HepG2 (cell line): ENCODE measurements at regions of chr15 and their contacts with region 1.

Region 1: GRCh38 chr15:56918046-56918938 is at the start of gene TCF12:
- DNase-seq: peak; percentile 71
- ATAC-seq: peak; percentile 83
- H3K4me3 ChIP-seq: peak within 1 kb of the TSS; percentile 76 to 99 (median 88)
- H3K27ac ChIP-seq: peak within 1 kb of the TSS; percentile 85
- H3K4me1 ChIP-seq: peaks cover 34% of the 10 kb centered on the region
- H3K27me3 ChIP-seq: no peaks in the 10 kb centered on the region
- CTCF ChIP-seq: peak; percentile 57
- EP300 ChIP-seq: peak; percentile 16 to 48; a peak in 1 of 4 replicates
- POLR2A ChIP-seq: peak; percentile 55 to 64; a peak in 3 of 4 replicates
- RAD21 ChIP-seq: peak; percentile 51; the same call in 1 of the 2 replicates
- total RNA-seq, gene TCF12: 51.1 and 70.7 TPM in 2 replicates

Region 2: GRCh38 chr15:56886932-56887781 is 31.1 kb before region 1 on chr15:
- CTCF ChIA-PET with region 1: no interaction called
- POLR2A ChIA-PET with region 1: interaction called, 60 read pairs
- in situ Hi-C with region 1: no loop called
- intact Hi-C with region 1: loop called (anchors 1 kb)
- DNase-seq: peak; percentile 88
- ATAC-seq: peak; percentile 96
- H3K4me3 ChIP-seq: peak overlapping the region; percentile 54 to 73 (median 72)
- H3K27ac ChIP-seq: peak overlapping the region; percentile 96
- H3K4me1 ChIP-seq: peaks cover 27% of the 10 kb centered on the region
- H3K27me3 ChIP-seq: no peaks in the 10 kb centered on the region; a peak in 1 of 5 replicates
- CTCF ChIP-seq: peak; percentile 54
- EP300 ChIP-seq: peak in 1 of 2 experiments; percentile 36; a peak in 1 of 4 replicates
- POLR2A ChIP-seq: peak; percentile 72 to 84
- RAD21 ChIP-seq: peak; percentile 60

Region 3: DNA sequence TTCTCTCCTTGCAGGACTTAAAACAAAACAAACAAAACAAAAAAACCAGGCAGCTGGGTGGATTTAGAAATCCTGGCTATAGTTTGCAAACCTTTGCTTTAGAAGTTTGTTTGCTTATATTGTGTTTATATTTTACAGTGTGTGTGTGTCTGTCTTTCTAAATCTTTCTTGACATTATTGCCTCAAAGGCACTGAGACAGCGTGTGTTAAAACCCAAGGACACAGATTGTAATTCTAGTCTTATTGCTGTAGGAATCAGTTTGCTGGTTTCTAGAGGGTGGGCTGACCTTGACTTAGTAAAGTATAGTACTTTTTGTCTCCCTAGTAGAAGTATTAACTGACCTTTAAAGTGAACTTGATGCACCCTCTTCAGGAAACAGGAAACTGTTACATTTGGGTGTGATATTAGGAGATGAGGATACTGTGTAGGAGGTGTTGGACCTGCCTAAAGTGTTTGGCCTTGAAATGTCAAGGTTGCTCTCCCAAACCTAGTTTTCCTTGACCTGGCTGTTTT is 71.2 kb after region 1 on chr15:
- CTCF ChIA-PET with region 1: no interaction called
- POLR2A ChIA-PET with region 1: no interaction called
- in situ Hi-C with region 1: no loop called
- intact Hi-C with region 1: loop called (anchors 2 kb)
- DNase-seq: peak; percentile 66
- ATAC-seq: peak; percentile 87
- H3K4me3 ChIP-seq: 0 out of 6 replicates have a peak overlapping the region, but pooled peaks of 1 of the 3 experiments have one; percentile 8
- H3K27ac ChIP-seq: peak overlapping the region; percentile 19
- H3K4me1 ChIP-seq: peaks cover 36% of the 10 kb centered on the region
- H3K27me3 ChIP-seq: no peaks in the 10 kb centered on the region
- CTCF ChIP-seq: peak; percentile 54
- EP300 ChIP-seq: no peak
- POLR2A ChIP-seq: no peak
- RAD21 ChIP-seq: 0 out of 2 replicates have a peak, but pooled peaks have one; percentile 14

Region 4: DNA sequence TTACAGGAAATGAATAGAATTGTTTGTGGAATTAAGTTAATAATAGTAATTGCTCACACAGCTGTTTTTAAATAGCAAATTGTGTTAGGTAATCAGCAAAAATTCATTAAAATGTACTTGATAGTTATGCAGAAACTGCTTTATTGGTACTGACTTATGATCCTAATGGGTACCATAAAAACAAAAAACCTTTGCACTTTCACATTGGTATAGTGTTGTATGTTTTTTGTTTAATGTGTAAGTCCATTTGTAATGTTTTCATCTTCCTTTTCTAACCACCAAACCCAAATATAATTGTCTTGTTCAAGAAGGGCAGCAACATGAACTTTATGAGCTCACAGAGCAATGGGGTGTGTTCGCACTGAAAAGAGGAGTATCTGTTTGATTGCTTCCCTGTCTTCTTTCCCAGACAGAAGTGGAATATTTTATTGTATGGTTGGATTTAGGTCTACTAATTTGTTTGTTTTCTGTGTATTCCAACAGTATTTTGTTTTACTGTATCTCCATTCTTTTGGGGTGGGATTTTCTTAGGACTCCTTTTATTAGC is 136.0 kb after region 1 on chr15:
- CTCF ChIA-PET with region 1: no interaction called
- POLR2A ChIA-PET with region 1: no interaction called
- in situ Hi-C with region 1: no loop called
- intact Hi-C with region 1: loop called (anchors 10 kb)
- DNase-seq: no peak
- ATAC-seq: no peak
- H3K4me3 ChIP-seq: no peak overlapping the region
- H3K27ac ChIP-seq: no peak overlapping the region
- H3K4me1 ChIP-seq: peaks cover 11% of the 10 kb centered on the region; the same call in 1 of the 2 replicates
- H3K27me3 ChIP-seq: no peaks in the 10 kb centered on the region
- CTCF ChIP-seq: no peak
- EP300 ChIP-seq: no peak
- POLR2A ChIP-seq: no peak
- RAD21 ChIP-seq: no peak

Region 5: GRCh38 chr15:57079931-57080620 is 161.8 kb after region 1 on chr15:
- CTCF ChIA-PET with region 1: no interaction called
- POLR2A ChIA-PET with region 1: no interaction called
- in situ Hi-C with region 1: no loop called
- intact Hi-C with region 1: no loop called
- DNase-seq: no peak
- ATAC-seq: no peak
- H3K4me3 ChIP-seq: no peak overlapping the region
- H3K27ac ChIP-seq: no peak overlapping the region
- H3K4me1 ChIP-seq: no peaks in the 10 kb centered on the region
- H3K27me3 ChIP-seq: no peaks in the 10 kb centered on the region
- CTCF ChIP-seq: no peak
- EP300 ChIP-seq: no peak
- POLR2A ChIP-seq: no peak
- RAD21 ChIP-seq: no peak

Region 6: GRCh38 chr15:57138349-57138788 is 220.1 kb after region 1 on chr15:
- CTCF ChIA-PET with region 1: no interaction called
- POLR2A ChIA-PET with region 1: no interaction called
- in situ Hi-C with region 1: no loop called
- intact Hi-C with region 1: loop called (anchors 10 kb)
- DNase-seq: peak; percentile 34
- ATAC-seq: peak; percentile 94
- H3K4me3 ChIP-seq: no peak overlapping the region
- H3K27ac ChIP-seq: no peak overlapping the region
- H3K4me1 ChIP-seq: no peaks in the 10 kb centered on the region
- H3K27me3 ChIP-seq: no peaks in the 10 kb centered on the region
- CTCF ChIP-seq: peak; percentile 51
- EP300 ChIP-seq: no peak
- POLR2A ChIP-seq: no peak
- RAD21 ChIP-seq: 0 out of 2 replicates have a peak, but pooled peaks have one; percentile 24

Region 7: DNA sequence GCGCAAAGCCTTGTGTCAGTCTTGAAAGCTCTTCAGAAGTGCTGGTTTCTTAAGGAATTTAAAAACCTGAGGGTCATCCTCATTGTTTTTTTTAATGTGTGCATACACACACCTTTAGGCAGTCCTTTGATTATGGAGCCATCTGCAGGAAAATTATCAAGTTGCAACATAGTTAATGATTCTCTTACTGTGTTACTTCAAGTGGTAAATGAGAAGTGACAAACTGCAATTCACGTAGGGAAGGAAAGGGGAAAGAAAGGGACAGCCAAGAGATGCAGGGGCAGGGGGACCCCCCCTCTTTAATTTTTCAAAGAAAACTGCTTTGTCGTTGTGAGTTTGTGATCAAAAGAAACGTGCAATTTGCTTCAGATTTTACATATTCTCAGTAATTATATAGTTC is 295.6 kb after region 1 on chr15:
- CTCF ChIA-PET with region 1: no interaction called
- POLR2A ChIA-PET with region 1: no interaction called
- in situ Hi-C with region 1: no loop called
- intact Hi-C with region 1: no loop called
- DNase-seq: peak; percentile 41
- ATAC-seq: peak; percentile 67
- H3K4me3 ChIP-seq: no peak overlapping the region
- H3K27ac ChIP-seq: no peak overlapping the region
- H3K4me1 ChIP-seq: peaks cover 12% of the 10 kb centered on the region
- H3K27me3 ChIP-seq: no peaks in the 10 kb centered on the region
- CTCF ChIP-seq: peak; percentile 67
- EP300 ChIP-seq: no peak
- POLR2A ChIP-seq: no peak
- RAD21 ChIP-seq: no peak; the same call in 1 of the 2 replicates